ENCODE measurements at regions of chr5 and their contacts with region 1.

Region 1: DNA sequence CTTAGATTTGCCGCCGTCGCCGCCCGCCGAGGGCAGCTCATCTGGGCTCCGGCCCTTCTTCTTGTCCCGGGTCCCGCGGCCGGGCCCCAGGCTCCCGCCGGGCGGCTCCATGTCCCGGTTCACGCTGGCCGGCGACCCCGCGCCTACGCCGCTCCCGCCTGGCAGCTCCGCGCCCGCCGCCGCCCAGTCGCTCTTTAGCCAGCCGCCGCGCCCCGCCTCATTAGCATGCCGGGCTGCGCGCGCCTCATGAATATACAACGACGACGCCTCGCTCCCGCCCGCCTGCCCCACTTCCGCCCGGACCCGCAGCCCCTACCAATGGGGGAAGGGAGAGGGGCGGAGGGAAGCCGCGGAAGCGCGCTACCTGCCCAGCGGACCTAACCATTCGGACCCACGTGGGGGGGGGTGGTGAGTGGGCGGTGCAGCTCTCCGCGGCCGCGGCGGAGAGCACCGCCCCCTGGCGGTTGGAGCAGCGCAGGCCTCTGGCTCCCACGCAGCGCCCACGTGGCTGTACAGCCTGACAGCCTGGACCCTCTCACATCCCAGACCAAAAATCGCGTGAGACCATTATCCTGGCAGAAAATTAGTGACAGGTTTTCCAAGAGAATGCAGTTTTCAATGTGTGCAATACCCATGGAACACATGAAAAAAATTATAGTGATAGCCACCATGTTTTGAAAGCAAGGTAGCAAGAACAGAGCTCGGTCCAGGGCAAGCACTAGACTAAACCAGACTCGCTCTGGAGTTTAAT is at the start of gene DIAPH1:
- H3K4me3 ChIP-seq: peak within 1 kb of the TSS; percentile 81
- H3K27ac ChIP-seq: peak within 1 kb of the TSS; percentile 78
- H3K4me1 ChIP-seq: peaks cover 19% of the 10 kb centered on the region; the same call in 1 of the 2 replicates
- CTCF ChIP-seq: peak; percentile 99

Region 2: DNA sequence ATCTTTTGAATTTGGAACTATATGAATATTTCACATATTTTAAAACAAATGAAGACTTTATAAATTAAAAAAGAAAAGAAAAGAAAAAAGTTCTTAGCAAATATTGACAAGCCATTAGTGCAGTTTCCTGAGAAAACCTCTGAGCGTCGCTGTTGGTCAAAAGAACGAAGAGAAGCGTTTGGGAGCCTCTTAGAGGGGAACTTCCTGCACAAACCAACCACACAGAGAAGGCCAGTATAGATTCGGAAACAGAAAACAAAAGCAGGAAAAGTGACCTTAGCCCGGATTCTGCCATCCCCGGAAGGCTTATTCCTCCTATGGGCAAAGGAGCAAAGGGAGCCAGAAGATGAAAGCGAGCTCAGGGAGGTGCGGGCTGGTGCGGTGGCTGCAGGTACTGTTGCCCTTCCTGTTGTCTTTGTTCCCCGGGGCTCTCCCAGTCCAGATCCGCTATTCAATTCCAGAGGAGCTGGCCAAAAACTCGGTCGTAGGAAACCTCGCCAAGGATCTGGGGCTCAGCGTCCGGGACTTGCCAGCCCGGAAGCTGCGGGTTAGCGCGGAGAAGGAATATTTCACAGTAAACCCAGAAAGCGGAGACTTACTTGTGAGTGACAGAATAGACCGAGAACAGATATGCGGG is 259.1 kb before region 1 on chr5 and contains the start of gene PCDHGB2:
- CTCF ChIA-PET with region 1: no interaction called
- POLR2A ChIA-PET with region 1: no interaction called
- H3K4me3 ChIP-seq: no peak within 1 kb of the TSS
- H3K27ac ChIP-seq: no peak within 1 kb of the TSS
- H3K4me1 ChIP-seq: no peaks in the 10 kb centered on the region
- CTCF ChIP-seq: no peak

Region 3: GRCh38 chr5:141590127-141590526 is 28.9 kb before region 1 on chr5:
- CTCF ChIA-PET with region 1: interaction called, 122 read pairs
- POLR2A ChIA-PET with region 1: interaction called, 37 read pairs
- H3K4me3 ChIP-seq: no peak overlapping the region
- H3K27ac ChIP-seq: no peak overlapping the region
- H3K4me1 ChIP-seq: peaks cover 3% of the 10 kb centered on the region; the same call in 1 of the 2 replicates
- CTCF ChIP-seq: no peak

Region 4: DNA sequence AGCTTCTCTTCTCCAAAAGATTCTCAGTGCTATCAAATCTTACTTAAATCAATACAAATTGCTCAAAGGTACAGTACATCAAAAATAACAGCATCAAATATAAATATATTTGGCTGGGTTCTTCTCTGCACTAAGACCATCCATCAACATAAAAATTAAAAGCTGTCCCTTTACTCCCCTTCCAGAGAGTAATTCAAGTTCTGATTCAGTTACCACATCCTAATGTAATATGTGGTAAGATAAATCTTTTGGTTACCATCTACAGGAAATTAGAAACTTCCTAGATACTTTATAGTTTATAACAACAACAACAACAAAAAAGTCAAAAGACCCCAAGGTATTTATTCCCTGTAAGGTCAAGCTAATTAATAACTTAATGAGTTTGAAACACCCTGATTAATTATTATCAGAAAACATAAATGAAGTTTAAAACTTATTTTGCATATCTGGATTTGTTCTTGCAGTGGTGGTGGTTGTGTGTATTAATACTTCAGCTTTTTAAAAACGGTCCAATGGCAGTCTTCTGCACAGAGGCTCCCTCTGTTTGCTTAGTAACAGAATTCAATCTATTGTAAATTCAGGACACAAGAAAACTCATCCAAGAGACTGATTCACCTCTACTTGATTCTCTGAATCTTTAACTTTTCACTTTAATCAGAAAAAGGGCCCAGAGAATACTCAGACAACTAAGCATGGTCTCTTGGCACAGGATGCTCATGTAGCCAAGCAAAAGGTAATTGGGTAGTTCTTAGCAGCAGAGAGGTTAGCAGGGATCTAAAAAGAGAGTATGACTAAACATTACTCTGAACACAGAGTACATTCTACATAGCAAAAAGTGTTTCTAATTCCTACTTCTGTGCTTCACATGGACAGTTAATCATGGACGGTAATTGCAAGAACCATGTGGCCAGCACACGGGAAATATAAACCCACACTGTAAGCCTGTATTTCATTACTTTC is 20.3 kb before region 1 on chr5:
- CTCF ChIA-PET with region 1: interaction called, 122 read pairs
- POLR2A ChIA-PET with region 1: interaction called, 4 read pairs
- H3K4me3 ChIP-seq: no peak overlapping the region
- H3K27ac ChIP-seq: no peak overlapping the region
- H3K4me1 ChIP-seq: no peaks in the 10 kb centered on the region
- CTCF ChIP-seq: no peak

Region 5: DNA sequence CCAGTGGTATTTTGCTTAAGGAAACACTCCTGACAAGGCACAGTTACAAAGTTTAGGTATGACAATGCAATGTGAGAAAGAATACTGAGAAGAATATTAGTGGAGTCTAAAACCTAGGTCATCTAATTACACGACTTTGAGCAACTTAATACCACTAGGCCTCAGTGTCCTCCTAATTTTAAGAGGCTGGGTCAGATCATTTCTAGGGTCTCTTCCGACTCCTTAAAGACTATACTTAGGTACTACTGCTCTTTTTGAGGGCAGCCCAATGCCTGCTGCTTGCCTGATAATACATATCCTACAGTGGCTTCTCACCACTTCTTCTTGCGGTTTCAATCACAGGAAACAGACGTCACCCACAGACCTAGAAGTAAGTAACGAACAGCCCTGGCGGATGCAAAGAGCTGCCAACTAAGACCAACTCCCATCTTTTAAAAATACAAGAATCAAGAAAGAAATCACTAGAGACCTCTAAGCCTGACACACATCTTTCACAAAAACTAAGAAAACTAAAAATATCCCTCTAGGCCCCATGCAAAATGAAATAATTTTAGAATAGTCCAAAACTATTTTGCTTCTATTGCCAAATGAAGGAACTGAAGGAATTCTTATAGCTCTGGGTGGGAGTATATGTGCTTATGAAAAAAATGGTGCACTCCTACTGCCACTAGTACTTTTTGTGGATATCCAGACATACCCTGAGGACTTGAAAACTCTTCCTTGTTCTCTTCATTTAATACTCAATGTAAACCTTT is 13.3 kb before region 1 on chr5:
- CTCF ChIA-PET with region 1: interaction called, 30 read pairs
- POLR2A ChIA-PET with region 1: interaction called, 7 read pairs
- H3K4me3 ChIP-seq: no peak overlapping the region
- H3K27ac ChIP-seq: no peak overlapping the region
- H3K4me1 ChIP-seq: 0 out of 2 replicates have a peak, but pooled peaks cover 4% of the 10 kb centered on the region
- CTCF ChIP-seq: no peak

Region 6: DNA sequence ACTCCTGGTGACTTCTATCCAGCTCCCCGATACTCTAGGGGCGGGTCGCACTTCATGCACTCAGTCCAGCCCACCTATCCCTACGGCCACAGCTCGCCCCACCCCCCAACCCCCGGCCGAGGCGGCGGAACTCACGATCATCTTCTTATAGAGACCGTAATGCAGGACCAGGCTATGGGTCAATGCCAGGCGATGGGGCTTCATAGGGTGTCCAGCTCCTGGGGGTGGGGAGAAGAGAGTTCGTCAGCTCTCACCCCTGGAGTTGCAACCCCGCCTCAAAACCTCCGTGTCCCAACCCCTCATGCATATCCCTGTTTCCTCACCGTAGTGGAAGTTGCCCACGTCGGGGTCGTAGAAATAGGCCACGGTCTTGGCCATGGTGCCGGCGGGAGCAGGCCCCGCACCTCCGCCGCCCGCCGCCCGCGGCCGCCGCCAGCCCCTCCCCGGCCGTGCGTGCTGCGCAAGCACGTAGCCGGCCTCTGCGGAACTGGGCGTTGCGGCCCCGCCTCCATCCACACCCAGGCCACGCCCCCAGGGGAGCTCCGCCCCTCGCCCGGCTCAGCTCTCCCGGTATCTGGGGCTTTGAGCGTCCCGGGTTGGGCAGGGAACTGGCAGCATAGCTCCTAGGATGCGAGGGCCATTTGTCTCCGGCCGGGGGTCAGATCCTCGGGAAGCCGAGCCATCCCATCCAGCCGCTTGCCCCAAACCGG is 17.6 kb after region 1 on chr5 and contains the starts of genes HDAC3 and RELL2:
- CTCF ChIA-PET with region 1: interaction called, 125 read pairs
- POLR2A ChIA-PET with region 1: interaction called, 42 read pairs
- H3K4me3 ChIP-seq: peak within 1 kb of the TSS; percentile 97
- H3K27ac ChIP-seq: peak within 1 kb of the TSS; percentile 63; the same call in 1 of the 2 replicates
- H3K4me1 ChIP-seq: peaks cover 6% of the 10 kb centered on the region
- CTCF ChIP-seq: no peak

Region 7: GRCh38 chr5:141641634-141642267 is 22.8 kb after region 1 on chr5:
- CTCF ChIA-PET with region 1: interaction called, 125 read pairs
- POLR2A ChIA-PET with region 1: interaction called, 42 read pairs
- H3K4me3 ChIP-seq: no peak overlapping the region
- H3K27ac ChIP-seq: no peak overlapping the region
- H3K4me1 ChIP-seq: no peaks in the 10 kb centered on the region; the same call in 1 of the 2 replicates
- CTCF ChIP-seq: 0 out of 2 replicates have a peak, but pooled peaks have one; percentile 25

Region 8: DNA sequence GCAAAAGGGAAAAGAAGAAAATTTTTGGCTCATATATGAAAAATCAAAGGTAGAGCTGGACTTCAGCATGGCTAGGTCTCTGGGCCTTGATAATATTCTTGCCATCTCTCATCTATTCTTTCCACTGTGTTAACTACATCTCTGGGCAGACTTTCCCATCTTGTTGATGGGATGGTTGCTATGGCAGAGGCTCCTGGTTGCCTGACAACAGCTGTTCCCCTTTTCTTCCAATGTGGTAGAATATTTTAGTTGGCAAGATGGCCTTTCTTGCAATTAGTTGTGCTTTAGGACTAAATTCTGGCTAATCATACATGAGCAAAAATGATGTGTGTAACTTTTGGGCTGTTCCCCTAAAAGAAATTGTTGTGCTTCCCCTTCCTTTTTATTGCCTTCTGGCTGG is 103.3 kb after region 1 on chr5:
- CTCF ChIA-PET with region 1: no interaction called
- POLR2A ChIA-PET with region 1: no interaction called
- H3K4me3 ChIP-seq: no peak overlapping the region
- H3K27ac ChIP-seq: no peak overlapping the region
- H3K4me1 ChIP-seq: no peaks in the 10 kb centered on the region
- CTCF ChIP-seq: no peak

Region 9: GRCh38 chr5:141800617-141801016 is 181.6 kb after region 1 on chr5:
- CTCF ChIA-PET with region 1: no interaction called
- POLR2A ChIA-PET with region 1: no interaction called
- H3K4me3 ChIP-seq: no peak overlapping the region
- H3K27ac ChIP-seq: no peak overlapping the region
- H3K4me1 ChIP-seq: no peaks in the 10 kb centered on the region
- CTCF ChIP-seq: no peak